ENCODE measurements at regions of chr10 and their contacts with region 1.

Region 1: GRCh38 chr10:11515596-11516430 is 95.6 kb downstream of the USP6NL start:
- DNase-seq: no peak
- H3K4me3 ChIP-seq: no peak overlapping the region
- H3K27ac ChIP-seq: no peak overlapping the region
- H3K4me1 ChIP-seq: peaks cover 0 to 13% (median 3%) of the 10 kb centered on the region in 3 donors
- H3K27me3 ChIP-seq: no peaks in the 10 kb centered on the region
- CTCF ChIP-seq: peak; percentile 77 to 87 (median 82)
- POLR2A ChIP-seq: no peak

Region 2: DNA sequence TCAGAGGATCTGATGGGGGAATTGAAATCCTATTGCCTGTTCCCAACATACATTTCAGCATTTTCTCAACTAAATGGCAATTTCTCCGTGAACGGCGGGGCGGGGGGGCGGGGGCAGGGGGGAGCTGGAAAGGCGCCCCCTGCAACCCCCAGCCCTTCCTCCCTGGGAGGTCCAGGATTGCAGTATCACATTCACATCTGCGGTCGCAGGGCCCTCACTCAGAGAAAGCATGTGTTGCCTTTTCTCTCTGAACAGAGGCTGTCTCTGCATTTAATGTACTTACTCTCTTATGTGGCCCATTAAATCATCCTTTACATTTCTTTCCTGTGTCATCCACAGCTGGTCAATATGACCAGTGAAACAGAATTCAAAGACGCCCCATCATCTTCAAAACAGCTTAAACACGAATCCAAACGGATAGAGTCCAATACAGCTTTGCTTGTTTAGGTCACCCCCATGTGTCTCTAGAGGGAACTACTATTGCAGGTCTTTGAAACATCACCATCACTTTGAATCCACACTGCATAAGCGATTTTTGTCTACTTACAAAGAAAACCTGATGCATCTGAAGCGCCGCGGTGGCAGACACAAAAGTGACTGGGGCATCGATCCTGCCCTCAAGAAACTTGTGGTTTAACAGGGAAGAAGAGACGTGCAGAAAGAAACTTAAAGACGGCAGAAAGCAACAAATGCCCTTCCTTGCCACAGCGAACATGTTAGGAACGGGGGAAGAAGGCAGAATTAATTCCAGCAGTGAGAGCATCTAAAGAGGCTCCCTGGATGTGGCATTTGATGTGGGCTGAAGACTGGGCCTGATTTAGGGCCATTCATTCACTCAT is 209.3 kb after region 1 on chr10:
- intact Hi-C with region 1: loop called (anchors 10 kb)
- DNase-seq: no peak
- H3K4me3 ChIP-seq: no peak overlapping the region
- H3K27ac ChIP-seq: no peak overlapping the region
- H3K4me1 ChIP-seq: peaks cover 0 to 2% (median 0%) of the 10 kb centered on the region in 3 donors
- H3K27me3 ChIP-seq: no peaks in the 10 kb centered on the region
- CTCF ChIP-seq: peak; percentile 13 to 82 (median 73)
- POLR2A ChIP-seq: no peak

Region 3: GRCh38 chr10:11757821-11758463 is 242.1 kb after region 1 on chr10:
- intact Hi-C with region 1: loop called (anchors 5 kb)
- DNase-seq: peak; percentile 42
- H3K4me3 ChIP-seq: no peak overlapping the region
- H3K27ac ChIP-seq: peak overlapping the region; percentile 60 to 87 (median 79)
- H3K4me1 ChIP-seq: peaks cover 9 to 31% (median 20%) of the 10 kb centered on the region in 3 donors
- H3K27me3 ChIP-seq: no peaks in the 10 kb centered on the region
- CTCF ChIP-seq: peak; percentile 83 to 98 (median 92)
- POLR2A ChIP-seq: no peak